BJ (cell line): ENCODE measurements at regions of chr5 and their contacts with region 1.

Region 1: DNA sequence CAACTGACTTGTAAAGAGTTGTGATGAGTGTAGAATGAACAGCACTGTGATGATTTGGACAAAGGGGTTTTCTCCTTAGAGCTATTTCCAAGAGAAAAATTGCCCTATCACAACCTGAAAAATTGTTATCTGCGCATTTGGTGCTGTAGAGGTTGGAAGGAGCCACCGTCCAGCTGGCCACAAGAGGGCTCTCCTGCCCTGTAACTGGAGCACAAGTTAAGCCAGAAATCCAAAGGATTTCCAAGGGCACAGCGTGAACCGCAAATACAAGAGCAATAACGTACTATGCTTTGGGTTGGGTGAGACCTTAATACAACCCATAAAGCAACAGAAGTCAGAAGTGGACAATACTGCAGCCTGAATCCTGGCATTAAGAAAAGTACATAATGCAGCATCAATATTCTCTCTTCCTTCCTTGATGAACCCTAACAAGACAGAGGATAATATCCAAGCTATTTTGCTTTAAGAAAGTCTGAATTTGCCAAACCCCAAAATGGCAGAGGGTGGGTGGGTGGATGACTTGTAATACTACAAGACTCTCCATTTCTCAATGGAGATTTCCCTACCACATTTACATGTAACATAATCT is 56.8 kb upstream of the SMIM32 start:
- DNase-seq: peak; percentile 5
- H3K4me3 ChIP-seq: no peak overlapping the region
- H3K27me3 ChIP-seq: peaks cover 2% of the 10 kb centered on the region; the same call in 1 of the 2 replicates
- CTCF ChIP-seq: peak; percentile 97

Region 2: DNA sequence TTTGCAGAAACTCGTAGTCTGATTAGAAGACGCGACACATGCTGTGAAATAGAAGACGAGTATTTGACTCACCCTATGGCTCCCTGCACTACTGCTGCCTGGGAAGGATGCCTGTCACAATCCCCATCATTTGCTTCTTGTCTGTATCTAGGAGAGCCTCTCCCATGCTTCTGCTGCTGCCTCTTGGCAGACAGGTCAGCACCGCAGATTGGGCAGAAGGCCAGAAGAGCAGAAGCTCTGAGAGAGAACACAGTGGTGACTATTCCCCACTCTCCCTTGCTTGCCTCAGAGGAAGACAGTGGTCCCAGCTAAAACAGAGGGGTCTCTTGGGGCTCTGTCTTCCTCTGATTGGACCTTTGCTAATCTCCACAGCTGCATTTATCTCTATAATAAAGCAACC is 27.2 kb after region 1 on chr5:
- CTCF ChIA-PET with region 1: interaction called, 10 read pairs
- POLR2A ChIA-PET with region 1: no interaction called
- DNase-seq: no peak
- H3K4me3 ChIP-seq: no peak overlapping the region
- H3K27me3 ChIP-seq: no peaks in the 10 kb centered on the region; the same call in 1 of the 2 replicates
- CTCF ChIP-seq: no peak

Region 3: DNA sequence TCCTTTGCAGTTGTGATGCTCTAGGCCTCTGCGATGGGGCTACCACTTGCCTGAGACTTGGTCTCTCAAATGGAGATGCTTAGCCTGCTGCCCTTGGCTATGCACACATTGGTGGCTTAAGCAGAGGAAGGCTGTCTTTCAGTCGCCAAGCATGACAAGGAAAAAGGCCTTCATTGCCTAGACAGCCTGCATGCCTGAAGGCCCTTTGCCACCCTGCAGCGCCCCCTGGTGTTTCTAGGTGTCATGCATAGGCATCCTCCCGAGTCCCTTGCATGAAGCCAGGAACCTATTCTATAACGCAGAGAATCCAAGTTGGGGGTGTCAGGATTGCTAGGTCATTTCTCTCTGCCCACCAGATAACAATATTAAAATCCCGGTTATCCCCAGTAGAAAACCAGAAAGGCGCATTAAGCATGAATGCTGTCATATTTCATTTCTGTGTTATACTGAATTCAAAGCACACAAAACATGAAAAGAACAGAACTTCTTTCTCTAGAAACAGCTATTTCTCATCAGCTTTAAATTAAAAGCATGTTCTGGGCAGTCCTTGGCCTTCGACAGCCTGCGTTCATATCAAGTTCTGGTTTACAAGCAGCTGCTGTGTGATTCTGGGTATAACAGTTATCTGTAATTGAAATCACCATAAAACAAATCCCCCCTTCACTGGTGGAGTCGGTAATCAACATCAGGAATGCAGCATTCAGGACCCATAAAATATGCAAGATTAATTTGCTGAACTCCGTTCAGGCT is 175.2 kb after region 1 on chr5:
- CTCF ChIA-PET with region 1: interaction called, 52 read pairs
- POLR2A ChIA-PET with region 1: no interaction called
- DNase-seq: no peak
- H3K4me3 ChIP-seq: no peak overlapping the region
- H3K27me3 ChIP-seq: no peaks in the 10 kb centered on the region
- CTCF ChIP-seq: peak; percentile 83